ENCODE measurements at regions of chr1 and their contacts with region 1.

Region 1: GRCh38 chr1:20194757-20195461 is 8.6 kb upstream of the PLA2G2C start:
- DNase-seq: peak; percentile 42 to 53
- ATAC-seq: peak; percentile 72 to 86; a peak in 4 of 6 replicates
- H3K4me3 ChIP-seq: no peak overlapping the region
- H3K27ac ChIP-seq: no peak overlapping the region
- H3K4me1 ChIP-seq: peaks cover 8% of the 10 kb centered on the region; the same call in 1 of the 3 replicates
- CTCF ChIP-seq: peak; percentile 54; the same call in 2 of the 3 replicates
- EP300 ChIP-seq: no peak
- POLR2A ChIP-seq: no peak
- RAD21 ChIP-seq: peak; percentile 40 to 45; a peak in 3 of 5 replicates

Region 2: DNA sequence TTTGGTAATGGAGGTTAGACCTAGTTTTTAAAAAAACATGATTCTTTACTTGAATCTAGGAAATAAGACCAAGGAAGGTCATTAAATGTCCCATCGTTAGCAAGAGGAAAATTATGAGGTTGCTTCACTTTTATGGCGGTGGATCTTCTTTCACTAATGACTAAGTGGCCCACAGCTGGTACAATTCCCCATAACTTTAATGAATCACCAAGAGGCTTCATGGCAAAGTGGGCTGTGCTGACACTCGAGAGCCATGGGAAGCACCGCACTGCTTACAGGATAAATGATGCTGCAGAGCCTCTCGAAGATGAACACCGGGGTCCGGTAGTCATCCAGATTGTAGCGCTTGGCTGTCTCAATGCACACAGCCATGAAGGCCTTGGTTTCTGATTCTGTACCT is 1093.7 kb before region 1 on chr1:
- CTCF ChIA-PET with region 1: no interaction called
- POLR2A ChIA-PET with region 1: no interaction called
- DNase-seq: no peak
- ATAC-seq: no peak
- H3K4me3 ChIP-seq: no peak overlapping the region
- H3K27ac ChIP-seq: no peak overlapping the region
- H3K4me1 ChIP-seq: 0 out of 3 replicates have a peak, but pooled peaks cover 3% of the 10 kb centered on the region
- CTCF ChIP-seq: no peak
- EP300 ChIP-seq: no peak
- POLR2A ChIP-seq: no peak
- RAD21 ChIP-seq: no peak

Region 3: DNA sequence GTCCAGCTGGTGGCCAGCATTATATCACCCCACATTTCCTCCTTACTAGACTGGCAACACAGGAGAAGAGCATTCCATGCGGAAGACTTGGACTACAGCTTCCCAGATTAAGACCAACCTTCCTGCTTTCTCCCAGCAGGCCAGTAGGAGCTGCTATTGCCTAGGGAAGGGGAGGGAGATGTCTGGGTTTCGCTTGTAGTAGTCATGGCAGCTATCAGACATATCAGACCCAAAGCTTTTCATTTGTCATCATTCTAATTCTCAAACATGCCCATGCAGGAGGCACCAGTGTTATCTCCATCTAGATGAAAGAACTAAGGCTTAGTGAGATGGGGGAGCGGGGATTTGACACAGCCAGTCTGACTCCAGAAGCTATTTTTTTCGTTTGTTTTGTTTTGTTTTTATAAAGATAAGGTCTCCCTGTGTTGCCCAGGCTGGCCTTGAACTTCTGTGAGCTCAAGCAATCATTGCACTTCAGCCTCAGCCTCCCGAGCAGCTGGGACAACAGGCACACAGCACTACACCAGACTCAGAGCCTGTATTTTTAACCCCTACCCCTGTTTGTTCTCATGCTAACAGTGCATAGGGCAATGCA is 220.0 kb before region 1 on chr1:
- CTCF ChIA-PET with region 1: interaction called, 11 read pairs
- POLR2A ChIA-PET with region 1: no interaction called
- DNase-seq: peak; percentile 55 to 67
- ATAC-seq: peak; percentile 88 to 95
- H3K4me3 ChIP-seq: no peak overlapping the region
- H3K27ac ChIP-seq: no peak overlapping the region
- H3K4me1 ChIP-seq: no peaks in the 10 kb centered on the region
- CTCF ChIP-seq: peak; percentile 57
- EP300 ChIP-seq: no peak
- POLR2A ChIP-seq: no peak
- RAD21 ChIP-seq: peak; percentile 66 to 81

Region 4: GRCh38 chr1:20178634-20179370 is 16.1 kb before region 1 on chr1:
- CTCF ChIA-PET with region 1: interaction called, 13 read pairs
- POLR2A ChIA-PET with region 1: interaction called, 3 read pairs
- DNase-seq: no peak
- ATAC-seq: no peak
- H3K4me3 ChIP-seq: no peak overlapping the region
- H3K27ac ChIP-seq: no peak overlapping the region
- H3K4me1 ChIP-seq: 0 out of 3 replicates have a peak, but pooled peaks cover 2% of the 10 kb centered on the region
- CTCF ChIP-seq: no peak
- EP300 ChIP-seq: no peak
- POLR2A ChIP-seq: no peak
- RAD21 ChIP-seq: no peak

Measured in A549 (cell line).